CD8-positive, alpha-beta T cell (primary cell): ENCODE measurements at regions of chr5 and their contacts with region 1.

Region 1: DNA sequence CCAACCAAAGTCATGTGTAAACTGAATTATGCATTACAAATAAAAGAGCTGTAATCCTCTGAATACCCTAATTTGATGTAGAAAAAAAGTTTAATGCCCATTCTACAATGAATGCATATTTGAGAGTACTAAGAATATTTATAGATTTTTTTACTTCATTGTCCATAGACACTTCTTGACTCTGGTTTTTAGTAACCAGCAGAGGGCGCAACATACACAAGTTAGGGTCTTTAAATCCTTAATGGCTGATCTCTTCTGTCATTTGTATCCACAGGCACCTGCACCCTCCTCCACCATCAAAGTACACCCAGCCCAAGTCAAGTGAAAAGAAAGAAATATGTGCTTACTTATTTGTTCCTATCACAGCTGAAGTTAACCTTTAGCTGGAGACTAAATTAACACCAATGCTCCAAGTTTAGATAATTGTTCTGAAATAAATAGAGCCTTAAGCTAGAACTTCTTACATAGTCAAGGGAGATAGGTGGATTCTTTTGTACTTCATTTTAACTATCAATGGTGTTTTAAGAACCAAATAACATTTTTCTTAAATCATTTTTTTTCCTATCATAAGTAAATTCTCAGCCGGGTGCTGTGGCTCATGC is 524.2 kb upstream of the DAB2 start:
- DNase-seq: peak; percentile 7 to 84 (median 63)
- ATAC-seq: peak; percentile 87
- H3K4me3 ChIP-seq: no peak overlapping the region
- H3K4me3 Mint-ChIP-seq: no peak overlapping the region
- H3K27ac ChIP-seq: no peak overlapping the region
- H3K27ac Mint-ChIP-seq: no peak overlapping the region
- H3K4me1 ChIP-seq: no peaks in the 10 kb centered on the region
- H3K4me1 Mint-ChIP-seq: peaks cover 2% of the 10 kb centered on the region
- H3K27me3 ChIP-seq: no peaks in the 10 kb centered on the region
- H3K27me3 Mint-ChIP-seq: no peaks in the 10 kb centered on the region
- CTCF ChIP-seq: peak; percentile 72

Region 2: GRCh38 chr5:38167562-38167996 is 1781.4 kb before region 1 on chr5:
- CTCF ChIA-PET with region 1: no interaction called
- POLR2A ChIA-PET with region 1: no interaction called
- intact Hi-C with region 1: no loop called
- DNase-seq: no peak
- ATAC-seq: no peak
- H3K4me3 ChIP-seq: no peak overlapping the region
- H3K4me3 Mint-ChIP-seq: no peak overlapping the region
- H3K27ac ChIP-seq: no peak overlapping the region
- H3K27ac Mint-ChIP-seq: no peak overlapping the region
- H3K4me1 ChIP-seq: no peaks in the 10 kb centered on the region
- H3K4me1 Mint-ChIP-seq: no peaks in the 10 kb centered on the region
- H3K27me3 ChIP-seq: no peaks in the 10 kb centered on the region
- H3K27me3 Mint-ChIP-seq: no peaks in the 10 kb centered on the region
- CTCF ChIP-seq: no peak

Region 3: GRCh38 chr5:39578887-39579497 is 370.0 kb before region 1 on chr5:
- CTCF ChIA-PET with region 1: no interaction called
- POLR2A ChIA-PET with region 1: no interaction called
- intact Hi-C with region 1: loop called (anchors 5 to 10 kb)
- DNase-seq: peak in 2 of 9 experiments; percentile 36 to 52
- ATAC-seq: no peak
- H3K4me3 ChIP-seq: no peak overlapping the region
- H3K4me3 Mint-ChIP-seq: no peak overlapping the region
- H3K27ac ChIP-seq: no peak overlapping the region
- H3K27ac Mint-ChIP-seq: no peak overlapping the region
- H3K4me1 ChIP-seq: peaks cover 4% of the 10 kb centered on the region
- H3K4me1 Mint-ChIP-seq: peaks cover 6% of the 10 kb centered on the region
- H3K27me3 ChIP-seq: no peaks in the 10 kb centered on the region
- H3K27me3 Mint-ChIP-seq: peaks cover 5% of the 10 kb centered on the region
- CTCF ChIP-seq: peak; percentile 98

Region 4: DNA sequence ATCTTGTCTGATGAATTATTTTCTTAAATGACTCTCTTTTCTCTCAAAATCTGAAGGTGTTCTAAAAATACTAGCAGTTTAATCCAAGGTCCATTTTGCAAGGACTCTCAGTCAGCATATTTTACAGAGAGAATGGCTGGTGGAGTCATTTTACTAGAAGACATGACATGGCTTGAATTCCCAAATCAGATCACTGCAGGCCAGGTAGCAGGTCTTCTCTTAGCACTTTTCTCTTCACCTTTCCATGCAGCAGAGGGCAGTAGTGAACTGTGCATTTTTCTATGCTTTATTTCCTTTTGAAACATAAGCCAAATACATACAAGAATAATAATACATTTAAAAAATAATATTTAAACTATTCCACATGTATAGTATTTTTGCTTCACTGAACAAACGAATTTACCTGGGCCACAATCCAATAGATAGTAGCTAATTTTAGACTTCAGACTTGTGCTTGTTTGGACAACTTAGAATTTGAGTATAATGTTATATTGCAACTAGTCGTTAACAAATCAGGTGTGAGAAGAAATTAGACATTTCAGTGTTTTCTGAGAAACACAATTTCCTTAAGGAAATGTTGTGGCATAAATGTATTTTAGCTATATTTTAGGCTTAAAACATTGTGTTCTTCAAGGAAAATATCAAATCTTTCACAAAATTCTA is 234.8 kb before region 1 on chr5:
- CTCF ChIA-PET with region 1: no interaction called
- POLR2A ChIA-PET with region 1: no interaction called
- intact Hi-C with region 1: loop called in 1 of 2 experiments (anchors 10 kb)
- DNase-seq: peak in 6 of 9 experiments; percentile 1 to 66 (median 26)
- ATAC-seq: no peak
- H3K4me3 ChIP-seq: no peak overlapping the region
- H3K4me3 Mint-ChIP-seq: no peak overlapping the region
- H3K27ac ChIP-seq: no peak overlapping the region
- H3K27ac Mint-ChIP-seq: no peak overlapping the region
- H3K4me1 ChIP-seq: no peaks in the 10 kb centered on the region
- H3K4me1 Mint-ChIP-seq: no peaks in the 10 kb centered on the region
- H3K27me3 ChIP-seq: no peaks in the 10 kb centered on the region
- H3K27me3 Mint-ChIP-seq: peaks cover 9% of the 10 kb centered on the region
- CTCF ChIP-seq: peak; percentile 67

Region 5: DNA sequence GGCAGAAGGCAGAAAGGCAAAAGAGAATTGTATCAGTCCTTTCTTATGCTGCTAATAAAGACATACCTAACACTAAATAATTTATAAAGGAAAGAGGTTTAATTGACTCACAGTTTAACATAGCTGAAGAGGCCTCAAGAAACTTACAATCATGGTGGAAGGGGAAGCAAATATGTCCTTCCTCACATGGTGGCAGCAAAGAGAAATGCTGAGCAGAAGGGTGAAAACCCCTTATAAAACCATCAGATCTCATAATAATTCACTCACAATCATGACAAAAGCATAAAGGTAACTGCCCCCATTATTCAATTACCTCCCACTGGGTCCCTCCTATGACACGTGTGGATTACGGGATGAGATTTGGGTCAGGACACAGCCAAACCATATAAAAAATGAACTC is 418.3 kb after region 1 on chr5:
- CTCF ChIA-PET with region 1: no interaction called
- POLR2A ChIA-PET with region 1: no interaction called
- intact Hi-C with region 1: loop called (anchors 5 to 10 kb)
- DNase-seq: peak in 4 of 9 experiments; percentile 26 to 72 (median 48)
- ATAC-seq: peak; percentile 66
- H3K4me3 ChIP-seq: no peak overlapping the region
- H3K4me3 Mint-ChIP-seq: no peak overlapping the region
- H3K27ac ChIP-seq: no peak overlapping the region
- H3K27ac Mint-ChIP-seq: peak overlapping the region; percentile 42
- H3K4me1 ChIP-seq: no peaks in the 10 kb centered on the region
- H3K4me1 Mint-ChIP-seq: peaks cover 6% of the 10 kb centered on the region
- H3K27me3 ChIP-seq: no peaks in the 10 kb centered on the region
- H3K27me3 Mint-ChIP-seq: no peaks in the 10 kb centered on the region
- CTCF ChIP-seq: peak; percentile 44

Region 6: GRCh38 chr5:40502736-40503135 is 553.8 kb after region 1 on chr5:
- CTCF ChIA-PET with region 1: interaction called, 4 read pairs
- POLR2A ChIA-PET with region 1: no interaction called
- intact Hi-C with region 1: loop called in 1 of 2 experiments (anchors 10 kb)
- DNase-seq: no peak
- ATAC-seq: no peak
- H3K4me3 ChIP-seq: no peak overlapping the region
- H3K4me3 Mint-ChIP-seq: no peak overlapping the region
- H3K27ac ChIP-seq: no peak overlapping the region
- H3K27ac Mint-ChIP-seq: no peak overlapping the region
- H3K4me1 ChIP-seq: no peaks in the 10 kb centered on the region
- H3K4me1 Mint-ChIP-seq: peaks cover 9% of the 10 kb centered on the region
- H3K27me3 ChIP-seq: no peaks in the 10 kb centered on the region
- H3K27me3 Mint-ChIP-seq: no peaks in the 10 kb centered on the region
- CTCF ChIP-seq: no peak

Region 7: DNA sequence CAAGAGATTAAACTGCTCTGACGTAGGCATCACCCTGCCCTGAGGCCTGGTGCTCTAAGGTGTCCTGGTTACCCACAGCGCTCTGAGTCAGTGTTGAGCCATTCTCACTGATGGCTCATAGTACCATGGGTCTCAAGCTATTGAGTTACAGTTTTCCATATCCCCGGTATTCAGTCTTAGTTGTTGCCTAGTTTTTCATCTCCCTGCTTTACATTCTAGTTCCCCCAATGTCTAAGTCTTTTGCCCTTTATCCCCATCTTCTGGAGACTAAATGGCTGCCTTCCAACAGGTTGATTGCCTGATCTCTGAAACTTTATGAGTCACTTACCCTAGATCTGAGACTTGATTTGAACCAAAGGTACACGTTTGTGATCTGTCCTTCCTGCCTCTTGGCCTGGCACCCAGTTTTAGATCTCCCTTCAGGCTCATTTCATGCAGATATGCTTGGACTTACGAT is 569.6 kb after region 1 on chr5:
- CTCF ChIA-PET with region 1: no interaction called
- POLR2A ChIA-PET with region 1: no interaction called
- intact Hi-C with region 1: loop called in 1 of 2 experiments (anchors 10 kb)
- DNase-seq: no peak
- ATAC-seq: no peak
- H3K4me3 ChIP-seq: no peak overlapping the region
- H3K4me3 Mint-ChIP-seq: no peak overlapping the region
- H3K27ac ChIP-seq: no peak overlapping the region
- H3K27ac Mint-ChIP-seq: no peak overlapping the region
- H3K4me1 ChIP-seq: peaks cover 17% of the 10 kb centered on the region
- H3K4me1 Mint-ChIP-seq: peaks cover 27% of the 10 kb centered on the region
- H3K27me3 ChIP-seq: no peaks in the 10 kb centered on the region
- H3K27me3 Mint-ChIP-seq: no peaks in the 10 kb centered on the region
- CTCF ChIP-seq: no peak